Heart right ventricle (tissue), 16 donors: ENCODE measurements at regions of chr9 and their contacts with region 1.

Region 1: DNA sequence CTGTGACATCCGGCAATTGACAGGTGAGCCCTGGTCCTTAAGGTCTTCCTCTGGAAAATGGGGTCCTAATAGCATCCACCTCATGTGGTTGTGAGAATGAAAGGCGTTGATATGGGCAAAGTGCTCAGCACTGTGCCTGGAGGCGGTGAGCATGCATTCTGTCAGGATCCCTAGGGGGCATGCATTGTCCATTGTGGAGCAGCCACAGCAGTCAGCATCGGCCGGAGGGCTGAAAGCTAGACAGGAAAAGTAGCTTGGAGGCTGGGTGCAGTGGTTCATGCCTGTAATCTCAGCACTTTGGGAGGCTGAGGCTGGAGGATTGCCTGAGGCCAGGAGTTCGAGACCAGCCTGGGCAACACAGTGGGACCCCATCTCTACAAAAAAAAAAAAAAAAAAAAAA is 122.2 kb downstream of the LHX2 start:
- DNase-seq: peak; percentile 24 to 29
- ATAC-seq: peak in 7 of 8 donors; percentile 61 to 77 (median 70)
- H3K4me3 ChIP-seq: no peak overlapping the region
- H3K27ac ChIP-seq: no peak overlapping the region
- H3K4me1 ChIP-seq: peaks cover 0 to 4% (median 0%) of the 10 kb centered on the region in 9 donors
- H3K27me3 ChIP-seq: peaks cover 0 to 9% (median 0%) of the 10 kb centered on the region in 7 donors
- CTCF ChIP-seq: peak in 7 of 9 donors; percentile 42 to 61 (median 46)

Region 2: DNA sequence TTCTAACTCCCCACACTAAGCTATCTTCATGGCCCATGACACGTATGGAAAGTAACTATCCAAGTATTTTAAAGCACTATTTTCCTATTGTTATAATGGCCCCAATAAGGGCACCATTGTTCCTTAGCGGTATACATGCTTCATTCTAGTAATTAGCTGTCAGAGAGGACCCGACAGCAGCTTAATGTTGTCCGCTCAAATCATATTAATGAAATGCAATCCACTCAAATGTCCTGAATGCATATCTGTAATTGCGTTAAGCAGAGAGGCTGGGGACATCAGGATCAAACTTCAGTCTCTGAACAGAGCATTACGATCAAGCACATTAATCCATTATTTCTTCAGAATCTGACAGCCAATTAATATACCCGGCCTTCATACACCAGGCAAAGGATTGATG is 638.0 kb before region 1 on chr9:
- intact Hi-C with region 1: no loop called
- DNase-seq: no peak
- ATAC-seq: no peak
- H3K4me3 ChIP-seq: no peak overlapping the region
- H3K27ac ChIP-seq: no peak overlapping the region
- H3K4me1 ChIP-seq: no peaks in the 10 kb centered on the region
- H3K27me3 ChIP-seq: no peaks in the 10 kb centered on the region
- CTCF ChIP-seq: no peak

Region 3: DNA sequence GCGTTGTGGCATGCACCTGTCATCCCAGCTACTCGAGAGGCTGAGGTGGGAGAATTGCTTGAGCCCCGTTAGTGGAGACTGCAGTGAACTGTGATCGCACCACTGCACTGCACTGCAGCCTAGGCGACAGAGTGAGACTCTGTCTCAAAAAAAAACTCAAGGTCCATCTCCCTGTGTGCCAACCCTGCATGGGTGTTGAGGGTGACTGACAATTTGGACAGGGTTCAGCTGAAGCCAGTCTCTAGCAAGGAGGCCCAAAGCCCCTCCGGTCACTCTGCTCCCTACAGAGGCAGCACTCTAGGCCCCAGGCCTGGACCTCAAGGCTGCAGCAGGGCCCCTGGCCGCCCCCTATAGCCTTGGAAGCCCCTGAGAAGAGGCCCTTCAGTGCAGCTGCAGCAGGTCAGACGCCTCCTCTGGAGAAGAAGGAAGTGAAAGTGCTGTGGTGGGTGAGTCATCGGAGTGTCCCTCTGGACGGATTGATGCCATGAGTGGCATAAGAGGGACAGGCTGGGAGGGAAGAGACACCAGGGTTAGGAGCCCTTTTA is 84.8 kb after region 1 on chr9:
- intact Hi-C with region 1: no loop called
- DNase-seq: peak in 1 of 2 donors; percentile 44
- ATAC-seq: peak in 6 of 8 donors; percentile 32 to 54 (median 39)
- H3K4me3 ChIP-seq: no peak overlapping the region
- H3K27ac ChIP-seq: peak overlapping the region in 2 of 10 donors; percentile 49 to 81
- H3K4me1 ChIP-seq: peaks cover 3 to 99% (median 66%) of the 10 kb centered on the region in 9 donors
- H3K27me3 ChIP-seq: no peaks in the 10 kb centered on the region
- CTCF ChIP-seq: no peak

Region 4: GRCh38 chr9:124291801-124292396 is 158.2 kb after region 1 on chr9:
- intact Hi-C with region 1: loop called in 1 of 10 experiments (anchors 10 kb)
- DNase-seq: peak in 1 of 2 donors; percentile 61
- ATAC-seq: peak; percentile 35 to 80 (median 66)
- H3K4me3 ChIP-seq: peak overlapping the region in 4 of 10 donors; percentile 6 to 34 (median 20)
- H3K27ac ChIP-seq: peak overlapping the region in 4 of 10 donors; percentile 19 to 43 (median 36)
- H3K4me1 ChIP-seq: peaks cover 34 to 91% (median 72%) of the 10 kb centered on the region in 9 donors
- H3K27me3 ChIP-seq: no peaks in the 10 kb centered on the region
- CTCF ChIP-seq: peak in 3 of 9 donors; percentile 11 to 21 (median 11)

Region 5: DNA sequence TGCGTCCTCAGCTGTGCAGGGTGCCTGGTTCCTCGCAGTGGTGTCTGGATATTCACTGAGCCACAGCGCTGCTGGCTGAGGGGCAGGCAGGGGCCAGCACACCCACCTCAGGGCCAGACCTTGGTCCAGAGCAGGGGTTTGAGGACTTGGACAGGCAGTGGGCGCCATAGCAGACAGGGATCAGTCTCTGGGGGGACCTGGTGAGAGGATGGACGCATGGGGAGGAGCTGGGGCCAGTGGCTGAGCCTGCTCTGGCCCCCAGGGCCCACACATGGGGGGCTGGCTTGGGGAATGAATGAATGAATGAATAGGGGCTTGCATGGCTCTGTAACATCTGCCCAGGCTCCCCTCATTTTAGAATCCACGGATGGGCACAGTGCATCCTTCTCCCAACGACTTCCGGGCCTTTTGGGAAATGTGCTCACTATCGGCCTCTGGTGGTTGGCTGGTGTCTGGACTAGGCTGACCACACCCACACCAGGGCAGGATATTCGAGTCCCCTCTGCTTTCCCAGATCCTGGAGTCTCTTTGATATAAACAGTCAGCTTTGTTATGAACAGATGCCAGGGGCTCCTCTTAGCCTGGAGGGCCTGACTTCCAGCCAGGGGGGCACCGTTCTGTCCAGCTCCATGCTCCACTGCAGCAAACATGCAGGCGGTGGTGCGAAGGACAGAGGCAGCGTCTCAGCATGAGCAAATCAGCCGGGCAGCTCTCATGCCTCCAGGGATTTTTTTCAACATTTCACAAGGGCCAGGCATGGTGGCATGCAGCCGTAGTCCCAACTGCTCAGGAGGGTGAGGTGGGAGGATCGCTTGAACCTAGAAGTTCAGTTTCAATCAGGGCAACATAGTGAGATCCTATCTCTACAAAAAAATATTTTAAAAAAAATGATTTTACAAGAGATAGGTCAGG is 186.6 kb after region 1 on chr9:
- intact Hi-C with region 1: loop called in 3 of 10 experiments (anchors 2 to 5 kb)
- DNase-seq: peak; percentile 66 to 77
- ATAC-seq: peak; percentile 83 to 89 (median 88)
- H3K4me3 ChIP-seq: no peak overlapping the region
- H3K27ac ChIP-seq: no peak overlapping the region
- H3K4me1 ChIP-seq: peaks cover 0 to 15% (median 3%) of the 10 kb centered on the region in 9 donors
- H3K27me3 ChIP-seq: no peaks in the 10 kb centered on the region
- CTCF ChIP-seq: peak; percentile 73 to 92 (median 85)

Region 6: GRCh38 chr9:124532897-124533296 is 399.2 kb after region 1 on chr9:
- intact Hi-C with region 1: loop called in 9 of 10 experiments (anchors 2 to 10 kb)
- DNase-seq: no peak
- ATAC-seq: no peak
- H3K4me3 ChIP-seq: no peak overlapping the region
- H3K27ac ChIP-seq: no peak overlapping the region
- H3K4me1 ChIP-seq: no peaks in the 10 kb centered on the region
- H3K27me3 ChIP-seq: no peaks in the 10 kb centered on the region
- CTCF ChIP-seq: no peak